Endothelial cell of umbilical vein (primary cell): ENCODE measurements at regions of chr19 and their contacts with region 1.

Region 1: DNA sequence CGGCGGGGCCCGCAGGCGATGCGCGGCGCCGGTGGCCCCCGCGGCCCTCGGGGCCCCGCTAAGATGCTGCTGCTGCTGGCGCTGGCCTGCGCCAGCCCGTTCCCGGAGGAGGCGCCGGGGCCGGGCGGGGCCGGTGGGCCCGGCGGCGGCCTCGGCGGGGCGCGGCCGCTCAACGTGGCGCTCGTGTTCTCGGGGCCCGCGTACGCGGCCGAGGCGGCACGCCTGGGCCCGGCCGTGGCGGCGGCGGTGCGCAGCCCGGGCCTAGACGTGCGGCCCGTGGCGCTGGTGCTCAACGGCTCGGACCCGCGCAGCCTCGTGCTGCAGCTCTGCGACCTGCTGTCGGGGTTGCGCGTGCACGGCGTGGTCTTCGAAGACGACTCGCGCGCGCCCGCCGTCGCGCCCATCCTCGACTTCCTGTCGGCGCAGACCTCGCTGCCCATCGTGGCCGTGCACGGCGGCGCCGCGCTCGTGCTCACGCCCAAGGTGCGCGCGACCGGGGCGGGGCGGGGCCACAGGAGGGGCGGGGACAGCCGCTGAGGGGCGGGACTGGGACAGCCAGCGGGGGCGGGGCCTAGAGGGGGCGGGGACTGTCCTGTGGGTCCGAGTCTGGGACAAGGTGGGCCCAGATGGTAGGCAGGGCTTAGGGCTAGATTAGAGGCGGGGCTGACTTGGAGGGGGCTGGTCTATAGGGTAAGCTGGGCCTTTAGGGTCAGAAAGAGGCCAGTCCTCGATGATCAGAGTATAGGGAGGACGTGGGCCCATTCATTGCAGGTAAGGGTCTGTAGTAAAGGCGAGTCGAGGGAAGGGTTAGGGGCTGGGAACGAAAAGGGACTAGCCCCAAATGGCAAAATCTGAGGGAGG is 5.1 kb downstream of the GRIN2D start:
- DNase-seq: peak; percentile 74
- H3K4me3 ChIP-seq: peak overlapping the region; percentile 29 to 38 (median 32)
- H3K27ac ChIP-seq: no peak overlapping the region
- H3K4me1 ChIP-seq: peaks cover 10% of the 10 kb centered on the region
- H3K27me3 ChIP-seq: peaks cover 21 to 23% of the 10 kb centered on the region in 2 experiments
- CTCF ChIP-seq: no peak
- POLR2A ChIP-seq: no peak

Region 2: GRCh38 chr19:48415395-48415794 is 16.8 kb after region 1 on chr19:
- CTCF ChIA-PET with region 1: interaction called, 3 read pairs
- POLR2A ChIA-PET with region 1: no interaction called
- dilution Hi-C with region 1: no loop called
- intact Hi-C with region 1: loop called (anchors 2 kb)
- DNase-seq: peak; percentile 85
- H3K4me3 ChIP-seq: peak overlapping the region in 2 of 3 experiments; percentile 31 to 37
- H3K27ac ChIP-seq: no peak overlapping the region
- H3K4me1 ChIP-seq: peaks cover 6% of the 10 kb centered on the region
- H3K27me3 ChIP-seq: no peaks in the 10 kb centered on the region
- CTCF ChIP-seq: no peak
- POLR2A ChIP-seq: no peak

Region 3: DNA sequence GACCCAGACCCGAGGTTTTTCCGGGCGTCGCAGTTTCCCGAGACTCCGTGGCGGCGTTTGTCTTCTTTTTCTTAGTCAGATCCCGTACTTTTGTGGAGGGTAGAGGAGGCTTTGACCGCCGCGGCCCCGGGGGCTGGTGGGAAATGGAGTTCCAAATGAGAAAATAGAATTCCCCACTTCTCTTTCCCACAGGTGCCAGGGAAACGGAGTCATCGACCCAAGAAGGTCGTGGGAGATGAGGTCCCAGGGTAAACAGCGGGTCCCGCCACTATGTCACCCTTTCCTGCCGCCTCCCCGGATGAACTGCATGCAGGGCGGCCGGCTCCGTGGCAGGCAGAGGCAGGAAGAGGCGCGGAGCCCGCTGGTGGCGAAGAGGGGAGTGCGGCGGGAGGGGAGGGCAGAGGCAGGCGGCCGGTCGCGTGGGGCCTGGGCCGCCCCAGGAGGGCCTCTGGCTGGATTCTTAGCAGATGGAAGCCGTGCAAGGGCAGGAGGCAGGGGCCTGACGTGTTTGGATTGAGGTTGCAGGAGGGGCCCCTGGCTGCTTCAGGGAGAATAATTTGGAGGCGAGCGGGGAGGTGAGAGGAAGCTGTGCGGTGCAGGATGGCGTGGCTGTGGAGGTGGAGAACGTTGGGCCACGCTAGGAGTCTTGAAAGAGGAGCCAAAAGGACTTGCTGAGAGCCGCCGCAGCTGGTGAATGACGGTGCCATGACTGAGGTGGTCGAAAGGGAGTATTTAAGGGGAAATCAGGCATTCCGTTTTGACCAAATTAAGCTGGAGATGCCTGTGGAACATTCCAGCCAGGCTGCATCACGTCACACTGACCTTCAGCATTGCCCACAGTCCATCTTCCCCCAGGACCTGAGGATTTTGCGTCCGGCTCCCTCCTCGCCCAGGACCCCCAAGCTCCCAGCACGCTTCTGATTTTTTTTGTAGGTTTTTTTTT is 82.2 kb after region 1 on chr19:
- CTCF ChIA-PET with region 1: no interaction called
- POLR2A ChIA-PET with region 1: no interaction called
- dilution Hi-C with region 1: no loop called
- intact Hi-C with region 1: loop called (anchors 5 kb)
- DNase-seq: peak; percentile 52
- H3K4me3 ChIP-seq: peak overlapping the region; percentile 27 to 36 (median 28)
- H3K27ac ChIP-seq: peak overlapping the region; percentile 65
- H3K4me1 ChIP-seq: peaks cover 23% of the 10 kb centered on the region
- H3K27me3 ChIP-seq: no peaks in the 10 kb centered on the region
- CTCF ChIP-seq: peak in 1 of 2 donors; percentile 5
- POLR2A ChIP-seq: peak; percentile 11